ENCODE measurements at regions of chr17 and their contacts with region 1.

Region 1: DNA sequence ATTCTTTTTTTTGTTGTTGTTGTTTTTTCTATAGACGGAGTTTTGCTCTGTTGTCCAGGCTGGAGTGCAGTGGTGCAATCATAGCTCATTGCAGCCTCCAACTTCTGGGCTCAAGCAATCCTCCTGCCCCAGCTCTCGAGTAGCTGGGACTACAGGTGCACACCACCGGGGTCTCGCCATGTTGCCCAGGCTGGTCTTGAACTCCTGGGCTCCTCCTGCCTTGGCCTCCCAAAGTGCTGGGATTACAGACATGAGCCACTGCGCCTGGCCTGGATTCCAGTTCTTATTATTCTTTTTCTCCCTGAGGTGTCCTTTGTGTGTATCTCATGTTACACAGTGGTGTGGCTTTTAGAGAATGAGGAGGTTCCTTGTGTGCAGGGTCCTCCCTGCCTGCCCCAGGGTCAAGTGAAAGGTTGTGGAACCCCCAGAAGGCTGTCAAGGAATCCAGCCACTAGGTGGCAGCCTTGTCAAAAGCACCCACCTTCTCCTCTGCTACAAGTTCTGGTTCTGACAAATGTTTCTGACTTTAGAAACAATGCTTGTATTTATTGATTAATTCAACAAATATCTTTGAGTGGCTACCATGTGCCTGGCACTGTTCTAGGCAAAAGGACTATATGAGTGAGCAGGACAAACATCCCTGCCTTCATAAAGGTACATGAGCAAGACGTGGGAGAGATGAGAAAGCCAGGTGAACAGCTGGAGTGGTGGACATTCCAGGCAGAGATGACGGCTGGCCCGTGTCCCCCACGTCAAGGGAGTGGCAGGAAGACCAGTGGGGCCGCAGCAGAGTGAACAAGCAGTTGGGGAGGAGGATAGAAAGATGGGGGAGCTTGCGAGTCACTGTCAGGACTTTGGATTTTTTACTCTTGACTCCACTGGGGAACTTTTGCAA is 112.4 kb downstream of the SPECC1 start:
- DNase-seq: peak in 1 of 2 experiments; percentile 70
- H3K4me3 ChIP-seq: no peak overlapping the region
- H3K27ac ChIP-seq: no peak overlapping the region
- H3K4me1 ChIP-seq: no peaks in the 10 kb centered on the region
- H3K27me3 ChIP-seq: no peaks in the 10 kb centered on the region
- CTCF ChIP-seq: peak; percentile 98

Region 2: DNA sequence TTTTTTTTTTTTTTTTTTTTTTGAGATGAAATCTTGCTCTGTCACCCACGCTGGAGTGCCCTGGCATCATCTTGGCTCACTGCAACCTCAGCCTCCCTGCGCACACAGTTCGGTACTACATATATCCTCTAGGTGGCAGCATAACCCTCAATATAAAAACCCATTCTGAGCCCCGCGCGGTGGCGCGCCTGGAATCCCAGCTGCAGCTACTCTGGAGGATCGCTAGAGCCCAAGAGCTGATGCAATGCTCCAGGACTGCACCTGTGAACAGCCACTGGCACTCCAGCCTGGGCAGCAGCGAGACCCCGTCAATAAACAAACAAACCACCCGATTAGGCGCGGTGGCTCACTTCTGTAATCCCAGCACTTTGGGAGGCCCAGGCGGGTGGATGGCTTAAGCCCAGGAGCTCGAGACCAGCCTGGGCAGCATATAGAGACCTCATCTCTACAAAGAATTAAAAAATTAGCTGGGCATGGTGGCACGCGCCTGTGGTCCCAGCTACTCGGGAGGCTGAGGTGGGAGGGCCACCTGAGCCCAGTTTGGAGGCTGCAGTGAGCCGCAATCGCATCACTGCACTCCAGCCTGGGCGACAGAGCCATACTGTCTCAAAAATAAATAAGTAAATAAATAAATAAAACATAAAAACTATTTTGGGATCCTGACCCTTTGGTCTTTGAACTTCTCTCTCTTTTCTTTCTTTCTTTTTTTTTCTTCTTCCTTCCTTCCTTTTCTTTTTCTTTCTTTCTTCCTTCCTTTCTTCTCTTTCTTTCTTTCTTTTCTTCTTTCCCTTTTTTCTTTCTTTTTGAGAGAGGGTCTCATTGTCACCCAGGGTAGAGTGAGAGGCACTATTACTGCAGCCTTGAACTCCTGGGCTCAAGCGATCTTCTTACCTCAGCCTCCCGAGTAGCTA is 128.5 kb before region 1 on chr17:
- CTCF ChIA-PET with region 1: interaction called, 39 read pairs
- POLR2A ChIA-PET with region 1: no interaction called
- intact Hi-C with region 1: loop called (anchors 1 kb)
- DNase-seq: peak; percentile 87 to 92
- H3K4me3 ChIP-seq: peak overlapping the region; percentile 42; the same call in 1 of the 2 replicates
- H3K27ac ChIP-seq: peak overlapping the region; percentile 16; the same call in 1 of the 2 replicates
- H3K4me1 ChIP-seq: no peaks in the 10 kb centered on the region
- H3K27me3 ChIP-seq: no peaks in the 10 kb centered on the region
- CTCF ChIP-seq: peak; percentile 88

Region 3: GRCh38 chr17:20149251-20149650 is 27.6 kb after region 1 on chr17:
- CTCF ChIA-PET with region 1: interaction called, 12 read pairs
- POLR2A ChIA-PET with region 1: no interaction called
- intact Hi-C with region 1: no loop called
- DNase-seq: no peak
- H3K4me3 ChIP-seq: no peak overlapping the region
- H3K27ac ChIP-seq: no peak overlapping the region
- H3K4me1 ChIP-seq: no peaks in the 10 kb centered on the region
- H3K27me3 ChIP-seq: no peaks in the 10 kb centered on the region
- CTCF ChIP-seq: no peak

Region 4: GRCh38 chr17:20155258-20156195 is 33.9 kb after region 1 on chr17:
- CTCF ChIA-PET with region 1: no interaction called
- POLR2A ChIA-PET with region 1: no interaction called
- intact Hi-C with region 1: loop called (anchors 5 kb)
- DNase-seq: peak; percentile 95 to 100
- H3K4me3 ChIP-seq: peak overlapping the region; percentile 92
- H3K27ac ChIP-seq: peak overlapping the region; percentile 88
- H3K4me1 ChIP-seq: peaks cover 31% of the 10 kb centered on the region
- H3K27me3 ChIP-seq: no peaks in the 10 kb centered on the region
- CTCF ChIP-seq: no peak

Region 5: DNA sequence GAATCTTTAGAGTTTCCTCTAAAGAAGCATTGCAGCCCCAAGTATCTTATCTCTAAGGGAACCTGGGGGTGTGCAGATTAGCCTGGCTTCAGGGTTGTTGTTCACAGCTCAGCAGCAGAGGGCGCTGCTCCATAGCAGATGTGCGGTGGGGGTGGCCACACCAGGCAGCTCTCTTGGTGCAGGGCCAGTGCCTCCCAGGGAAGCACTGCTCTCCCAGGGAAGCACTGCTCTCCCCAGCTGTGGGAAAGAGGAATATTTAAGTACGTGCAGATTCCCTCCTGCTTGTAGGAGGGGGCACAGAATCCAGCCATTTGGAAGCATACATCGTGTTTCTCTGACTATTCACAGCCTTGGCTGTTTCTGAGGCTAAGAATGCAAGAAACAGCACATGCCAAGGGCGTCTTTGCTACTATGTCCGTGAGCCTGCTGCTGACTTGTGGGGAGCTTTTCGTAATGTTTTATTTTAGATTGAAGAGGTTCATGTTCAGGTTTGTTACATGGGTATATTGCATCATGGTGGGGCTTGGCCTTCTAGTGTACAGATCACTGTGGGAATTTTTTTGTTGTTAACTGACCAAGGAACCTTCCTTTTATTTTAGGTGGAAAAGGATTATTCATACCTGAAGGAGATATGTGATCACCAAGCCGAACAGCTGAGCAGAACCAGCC is 105.3 kb after region 1 on chr17:
- CTCF ChIA-PET with region 1: interaction called, 9 read pairs
- POLR2A ChIA-PET with region 1: no interaction called
- intact Hi-C with region 1: loop called (anchors 1 kb)
- DNase-seq: peak; percentile 42 to 76
- H3K4me3 ChIP-seq: no peak overlapping the region
- H3K27ac ChIP-seq: 0 out of 2 replicates have a peak overlapping the region, but pooled peaks have one; percentile 13
- H3K4me1 ChIP-seq: peaks cover 21% of the 10 kb centered on the region
- H3K27me3 ChIP-seq: no peaks in the 10 kb centered on the region
- CTCF ChIP-seq: peak; percentile 91

Region 6: GRCh38 chr17:20992987-20993862 is 871.6 kb after region 1 on chr17:
- CTCF ChIA-PET with region 1: no interaction called
- POLR2A ChIA-PET with region 1: no interaction called
- intact Hi-C with region 1: loop called (anchors 5 kb)
- DNase-seq: peak; percentile 62 to 83
- H3K4me3 ChIP-seq: no peak overlapping the region
- H3K27ac ChIP-seq: no peak overlapping the region
- H3K4me1 ChIP-seq: no peaks in the 10 kb centered on the region
- H3K27me3 ChIP-seq: no peaks in the 10 kb centered on the region
- CTCF ChIP-seq: peak; percentile 95